SK-N-SH (cell line): ENCODE measurements at regions of chr16 and their contacts with region 1.

Region 1: GRCh38 chr16:49491771-49492761 is 118.5 kb downstream of the C16orf78 start:
- DNase-seq: peak; percentile 94
- H3K4me3 ChIP-seq: peak overlapping the region in 1 of 2 experiments; percentile 26; a peak in 1 of 4 replicates
- H3K27ac ChIP-seq: no peak overlapping the region; a peak in 1 of 4 replicates
- H3K4me1 ChIP-seq: peaks cover 0 to 23% of the 10 kb centered on the region in 2 experiments; a peak in 1 of 4 replicates
- H3K27me3 ChIP-seq: no peaks in the 10 kb centered on the region
- CTCF ChIP-seq: peak; percentile 84
- EP300 ChIP-seq: no peak
- RAD21 ChIP-seq: peak; percentile 61

Region 2: GRCh38 chr16:49036126-49036525 is 455.9 kb before region 1 on chr16:
- CTCF ChIA-PET with region 1: no interaction called
- POLR2A ChIA-PET with region 1: no interaction called
- DNase-seq: no peak
- H3K4me3 ChIP-seq: no peak overlapping the region
- H3K27ac ChIP-seq: no peak overlapping the region
- H3K4me1 ChIP-seq: no peaks in the 10 kb centered on the region
- H3K27me3 ChIP-seq: no peaks in the 10 kb centered on the region
- CTCF ChIP-seq: no peak
- EP300 ChIP-seq: no peak
- RAD21 ChIP-seq: no peak

Region 3: DNA sequence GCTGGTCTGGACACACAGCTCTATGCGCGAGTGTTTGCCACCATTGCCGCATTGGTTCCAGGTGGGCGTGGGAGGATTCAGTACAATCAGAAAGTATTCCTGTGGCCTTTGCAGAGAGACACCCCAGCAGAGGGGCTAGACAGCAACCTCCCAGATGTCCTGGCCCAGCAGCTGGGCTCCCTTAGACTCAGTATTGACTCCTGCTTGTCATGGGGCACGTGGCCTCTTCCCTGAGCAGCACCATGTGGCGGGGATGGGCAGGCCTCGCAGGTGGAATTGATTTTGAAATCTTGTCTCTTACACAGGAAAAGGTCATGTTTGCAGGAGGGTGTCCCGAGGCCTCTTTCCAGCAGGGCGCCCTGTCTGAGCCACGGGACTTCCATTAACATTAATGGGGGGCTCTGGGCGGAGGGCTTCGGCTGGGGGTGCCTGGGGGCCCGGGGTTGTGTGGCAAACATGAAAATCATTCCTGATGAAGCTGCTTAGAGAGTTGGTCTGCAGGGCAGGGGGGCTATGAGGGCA is 22.1 kb before region 1 on chr16:
- CTCF ChIA-PET with region 1: interaction called, 14 read pairs
- POLR2A ChIA-PET with region 1: no interaction called
- DNase-seq: no peak
- H3K4me3 ChIP-seq: no peak overlapping the region
- H3K27ac ChIP-seq: no peak overlapping the region
- H3K4me1 ChIP-seq: peaks cover 0 to 11% of the 10 kb centered on the region in 2 experiments; a peak in 1 of 4 replicates
- H3K27me3 ChIP-seq: no peaks in the 10 kb centered on the region
- CTCF ChIP-seq: no peak
- EP300 ChIP-seq: no peak
- RAD21 ChIP-seq: no peak

Region 4: GRCh38 chr16:49513040-49513439 is 21.0 kb after region 1 on chr16:
- CTCF ChIA-PET with region 1: interaction called, 30 read pairs
- POLR2A ChIA-PET with region 1: no interaction called
- DNase-seq: peak; percentile 63
- H3K4me3 ChIP-seq: no peak overlapping the region
- H3K27ac ChIP-seq: no peak overlapping the region
- H3K4me1 ChIP-seq: peaks cover 0 to 28% of the 10 kb centered on the region in 2 experiments; a peak in 1 of 4 replicates
- H3K27me3 ChIP-seq: no peaks in the 10 kb centered on the region
- CTCF ChIP-seq: peak; percentile 11; the same call in 1 of the 2 replicates
- EP300 ChIP-seq: no peak
- RAD21 ChIP-seq: peak; percentile 54

Region 5: DNA sequence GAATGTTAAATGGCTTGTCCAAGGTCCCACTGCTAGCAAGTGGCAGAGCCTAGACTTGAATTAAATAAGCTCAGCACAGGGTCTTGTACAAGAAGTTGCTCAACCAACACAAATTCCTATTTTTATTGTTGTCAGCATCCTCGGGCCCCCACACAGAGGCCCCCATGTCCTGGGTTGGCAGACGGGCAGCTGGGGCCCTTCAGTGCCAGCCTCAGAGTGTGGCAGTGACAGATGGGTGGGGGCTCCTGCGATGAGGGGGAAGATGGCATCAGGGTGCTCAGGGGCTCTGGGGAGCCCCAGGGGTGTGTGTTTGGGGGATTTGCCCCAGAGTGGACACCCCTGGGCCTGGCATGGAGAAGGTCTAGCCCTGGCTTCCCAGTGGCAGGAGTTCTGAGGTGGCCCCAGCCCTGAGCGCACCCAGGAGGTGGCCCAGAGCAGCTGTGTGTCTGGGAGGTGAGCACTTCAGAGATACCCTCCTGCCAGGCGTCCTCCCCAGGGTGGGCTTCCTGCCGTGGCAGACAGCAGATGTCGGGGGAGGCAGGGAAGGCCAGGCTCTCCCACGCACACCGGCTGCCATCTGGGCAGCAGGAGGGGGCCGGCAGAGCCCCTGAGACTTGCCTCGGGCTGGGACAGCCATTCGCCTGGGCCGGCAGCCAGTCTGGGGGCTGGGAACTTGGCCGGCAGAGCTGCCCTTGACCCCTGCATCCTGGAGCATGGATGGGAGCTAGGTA is 32.3 kb after region 1 on chr16:
- CTCF ChIA-PET with region 1: interaction called, 15 read pairs
- POLR2A ChIA-PET with region 1: no interaction called
- DNase-seq: peak; percentile 92
- H3K4me3 ChIP-seq: no peak overlapping the region
- H3K27ac ChIP-seq: peak overlapping the region in 1 of 2 experiments; percentile 98; a peak in 2 of 4 replicates
- H3K4me1 ChIP-seq: peaks cover 9 to 80% of the 10 kb centered on the region in 2 experiments; a peak in 3 of 4 replicates
- H3K27me3 ChIP-seq: no peaks in the 10 kb centered on the region
- CTCF ChIP-seq: no peak
- EP300 ChIP-seq: peak in 1 of 2 experiments; percentile 85; a peak in 2 of 4 replicates
- RAD21 ChIP-seq: 0 out of 2 replicates have a peak, but pooled peaks have one; percentile 1